ENCODE measurements at regions of chr1 and their contacts with region 1.

Region 1: DNA sequence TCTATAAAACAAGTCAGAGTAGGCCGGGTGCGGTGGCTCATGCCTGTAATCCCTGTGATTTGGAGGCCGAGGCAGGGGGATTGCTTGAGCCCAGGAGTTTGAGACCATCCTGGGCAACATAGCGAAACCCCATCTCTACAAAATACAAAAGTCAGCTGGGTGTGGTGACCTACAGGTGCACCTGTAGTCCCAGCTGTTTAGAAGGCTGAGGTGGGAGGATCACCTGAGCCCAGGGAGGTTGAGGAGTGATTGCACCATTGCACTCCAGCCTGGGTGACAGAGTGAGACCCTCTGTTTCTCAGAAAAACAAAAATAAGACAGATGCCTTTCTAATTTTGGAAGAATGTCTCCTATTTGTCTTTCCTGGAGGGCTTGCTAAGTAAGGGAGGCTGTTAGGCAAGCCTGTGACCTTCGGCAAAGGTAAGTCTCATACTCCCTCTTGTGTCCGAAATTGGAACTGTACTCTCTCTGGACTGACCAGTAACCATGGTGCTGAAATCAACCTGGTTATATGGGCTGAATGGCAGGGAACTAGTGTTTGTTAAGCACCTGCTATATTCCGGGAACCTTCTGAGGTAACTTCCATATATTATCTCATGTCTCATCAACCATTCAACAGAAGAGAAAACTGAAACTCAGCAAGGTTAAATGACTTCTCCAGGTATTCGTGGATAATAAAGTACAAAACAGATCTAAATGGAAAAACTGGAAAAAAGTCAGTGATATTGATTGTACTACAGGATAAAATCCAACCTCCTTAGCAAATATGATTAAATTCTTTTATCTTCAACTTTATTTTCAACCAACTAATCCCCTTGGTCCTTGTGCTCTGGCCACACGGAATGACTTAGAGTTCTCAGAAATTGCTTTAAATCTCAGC is 11.8 kb upstream of the RAB3B start:
- DNase-seq: peak; percentile 98
- ATAC-seq: peak; percentile 99
- H3K4me3 ChIP-seq: no peak overlapping the region
- H3K27ac ChIP-seq: no peak overlapping the region
- H3K4me1 ChIP-seq: no peaks in the 10 kb centered on the region
- H3K27me3 ChIP-seq: no peaks in the 10 kb centered on the region
- CTCF ChIP-seq: peak; percentile 95

Region 2: GRCh38 chr1:51819810-51820209 is 182.5 kb before region 1 on chr1:
- CTCF ChIA-PET with region 1: no interaction called
- POLR2A ChIA-PET with region 1: no interaction called
- intact Hi-C with region 1: loop called (anchors 10 kb)
- DNase-seq: no peak
- ATAC-seq: no peak
- H3K4me3 ChIP-seq: no peak overlapping the region
- H3K27ac ChIP-seq: no peak overlapping the region
- H3K4me1 ChIP-seq: no peaks in the 10 kb centered on the region
- H3K27me3 ChIP-seq: no peaks in the 10 kb centered on the region
- CTCF ChIP-seq: no peak

Region 3: GRCh38 chr1:51897699-51898031 is 104.6 kb before region 1 on chr1:
- CTCF ChIA-PET with region 1: no interaction called
- POLR2A ChIA-PET with region 1: no interaction called
- intact Hi-C with region 1: loop called (anchors 1 kb)
- DNase-seq: peak; percentile 94
- ATAC-seq: peak; percentile 82
- H3K4me3 ChIP-seq: peak overlapping the region; percentile 56; the same call in 1 of the 2 replicates
- H3K27ac ChIP-seq: peak overlapping the region; percentile 86
- H3K4me1 ChIP-seq: peaks cover 29% of the 10 kb centered on the region
- H3K27me3 ChIP-seq: no peaks in the 10 kb centered on the region
- CTCF ChIP-seq: no peak

Region 4: DNA sequence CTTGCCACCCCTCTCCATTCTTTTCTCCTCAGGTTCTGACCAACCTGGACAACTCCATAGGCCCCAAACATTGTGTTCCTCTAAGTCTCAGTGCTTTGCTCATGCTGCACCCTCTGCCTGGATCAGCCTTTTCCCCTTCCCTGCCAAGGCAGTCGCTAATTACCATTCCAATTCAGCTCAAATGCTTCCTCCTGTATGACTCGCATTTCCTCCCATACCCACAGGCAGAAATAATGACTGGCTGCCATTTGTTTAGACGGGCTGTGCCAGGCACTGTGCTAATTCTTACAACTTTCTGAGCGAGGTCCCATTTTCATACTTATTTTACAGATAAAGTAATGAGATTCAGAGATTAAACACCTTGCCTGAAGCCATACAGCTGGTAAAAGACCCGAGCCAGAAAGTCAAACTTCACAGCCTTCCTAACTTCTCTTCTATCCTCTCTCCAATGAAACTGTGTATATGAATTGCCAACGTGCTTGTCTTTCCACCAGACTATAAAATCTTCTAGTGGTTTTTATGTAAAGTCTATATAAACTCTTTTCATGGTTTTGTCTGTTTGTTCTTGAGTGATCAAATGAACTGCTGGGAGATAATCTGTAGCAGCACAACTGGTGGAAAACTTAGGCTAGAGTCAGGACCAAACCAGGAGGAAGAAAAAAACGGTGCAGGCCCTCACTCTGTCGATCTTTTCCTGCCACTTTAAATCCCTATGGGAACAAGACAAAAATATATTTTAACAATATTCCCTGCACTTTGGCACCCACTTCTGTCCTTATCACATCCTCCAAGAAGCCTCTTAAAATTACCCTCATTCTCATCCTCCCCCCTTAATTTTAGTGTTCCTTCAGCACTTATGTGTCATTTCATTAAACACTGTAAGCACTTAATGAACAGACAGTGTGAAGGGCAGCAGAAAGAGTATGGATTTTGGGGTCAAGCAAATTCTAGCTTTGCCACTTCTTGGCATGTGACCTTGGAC is 45.5 kb before region 1 on chr1:
- CTCF ChIA-PET with region 1: no interaction called
- POLR2A ChIA-PET with region 1: no interaction called
- intact Hi-C with region 1: loop called (anchors 5 kb)
- DNase-seq: no peak
- ATAC-seq: peak; percentile 65
- H3K4me3 ChIP-seq: no peak overlapping the region
- H3K27ac ChIP-seq: no peak overlapping the region
- H3K4me1 ChIP-seq: no peaks in the 10 kb centered on the region; the same call in 1 of the 2 replicates
- H3K27me3 ChIP-seq: no peaks in the 10 kb centered on the region
- CTCF ChIP-seq: no peak

Region 5: DNA sequence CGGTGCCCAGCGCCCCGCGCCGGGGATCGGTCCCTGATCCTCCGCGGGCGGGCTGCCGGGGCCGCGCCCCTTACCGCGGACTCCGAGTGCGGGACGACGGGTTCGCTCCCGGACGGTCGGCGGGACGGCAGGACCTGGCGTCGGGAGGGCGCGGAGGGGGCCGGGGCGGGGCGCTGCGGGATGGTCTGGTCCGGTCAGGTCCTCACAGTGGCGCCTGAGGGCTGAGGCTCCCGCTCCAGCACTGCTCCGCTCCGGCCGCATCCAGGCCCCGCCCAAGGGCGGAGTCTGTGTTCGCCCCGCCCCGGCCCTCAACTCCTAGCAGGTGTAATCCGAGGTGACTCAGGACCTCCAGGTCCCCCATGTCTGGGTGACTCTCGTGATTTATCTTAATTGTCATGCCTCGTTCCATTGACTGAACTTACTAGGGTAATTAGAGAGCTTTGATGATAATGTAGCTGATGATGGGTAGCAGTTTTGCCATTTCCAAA is 11.8 kb before region 1 on chr1 and contains the start of gene RAB3B:
- CTCF ChIA-PET with region 1: interaction called, 21 read pairs
- POLR2A ChIA-PET with region 1: no interaction called
- intact Hi-C with region 1: no loop called
- DNase-seq: peak; percentile 77
- ATAC-seq: peak; percentile 100
- H3K4me3 ChIP-seq: peak within 1 kb of the TSS; percentile 76
- H3K27ac ChIP-seq: no peak within 1 kb of the TSS
- H3K4me1 ChIP-seq: no peaks in the 10 kb centered on the region
- H3K27me3 ChIP-seq: no peaks in the 10 kb centered on the region
- CTCF ChIP-seq: no peak
- total RNA-seq, gene RAB3B: 4.5 and 5.0 TPM in 2 replicates

Region 6: GRCh38 chr1:52054496-52055065 is 52.3 kb after region 1 on chr1:
- CTCF ChIA-PET with region 1: no interaction called
- POLR2A ChIA-PET with region 1: no interaction called
- intact Hi-C with region 1: no loop called
- DNase-seq: no peak
- ATAC-seq: no peak
- H3K4me3 ChIP-seq: peak overlapping the region; percentile 93
- H3K27ac ChIP-seq: peak overlapping the region; percentile 60
- H3K4me1 ChIP-seq: peaks cover 32% of the 10 kb centered on the region
- H3K27me3 ChIP-seq: no peaks in the 10 kb centered on the region
- CTCF ChIP-seq: no peak

Measured in PC-3 (cell line).